ENCODE measurements at regions of chr21 and their contacts with region 1.

Region 1: DNA sequence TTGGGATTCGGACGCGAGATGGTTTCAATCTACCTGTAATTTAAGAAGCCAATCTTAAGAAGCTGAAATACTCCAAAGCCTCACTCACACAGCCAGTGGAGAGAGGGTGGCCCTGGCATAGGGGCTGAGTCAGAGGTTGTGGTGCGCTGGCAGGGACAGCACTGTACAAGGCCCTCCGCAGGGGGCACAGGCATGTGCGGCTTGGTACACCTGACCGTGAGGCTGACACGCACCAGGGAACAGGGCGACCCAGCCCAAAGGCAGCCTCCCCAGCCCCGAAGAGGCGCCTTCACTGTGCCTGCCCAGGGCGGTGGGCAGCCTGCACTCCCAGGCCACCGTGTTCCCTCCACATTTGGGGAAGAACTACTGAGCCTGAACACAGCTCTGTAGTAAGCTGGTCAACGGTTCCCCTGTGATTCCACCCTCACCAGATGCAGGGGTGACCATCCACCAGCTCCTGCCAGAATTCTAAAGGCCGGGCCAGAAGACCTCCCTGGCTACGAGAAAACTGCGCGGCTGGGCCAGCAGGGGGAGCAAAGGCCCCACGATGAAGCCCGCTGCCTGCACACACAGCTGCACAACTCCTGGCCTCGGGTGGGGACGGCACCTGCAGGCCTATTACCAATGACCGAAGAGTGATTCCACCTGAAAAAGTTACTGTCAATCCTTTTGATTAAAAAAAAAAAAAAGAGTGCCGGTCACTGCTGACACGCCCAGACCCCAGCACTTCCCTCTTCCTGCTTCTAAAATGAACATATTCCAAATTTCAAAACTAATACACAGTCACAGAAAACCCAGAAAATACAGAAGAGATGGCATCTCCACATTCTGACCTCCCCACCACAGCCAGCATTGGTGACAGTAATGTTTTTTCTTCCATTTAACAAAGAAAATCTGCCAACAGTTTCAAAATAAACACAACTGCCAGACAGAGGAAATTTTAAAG is 49.6 kb upstream of the RIPK4 start:
- DNase-seq: no peak
- ATAC-seq: peak; percentile 99
- H3K4me3 ChIP-seq: no peak overlapping the region
- H3K27ac ChIP-seq: no peak overlapping the region
- H3K4me1 ChIP-seq: peaks cover 5% of the 10 kb centered on the region; the same call in 1 of the 2 replicates
- H3K27me3 ChIP-seq: no peaks in the 10 kb centered on the region
- CTCF ChIP-seq: peak; percentile 84 to 93 (median 87)
- EP300 ChIP-seq: no peak
- POLR2A ChIP-seq: no peak
- RAD21 ChIP-seq: peak; percentile 88

Region 2: DNA sequence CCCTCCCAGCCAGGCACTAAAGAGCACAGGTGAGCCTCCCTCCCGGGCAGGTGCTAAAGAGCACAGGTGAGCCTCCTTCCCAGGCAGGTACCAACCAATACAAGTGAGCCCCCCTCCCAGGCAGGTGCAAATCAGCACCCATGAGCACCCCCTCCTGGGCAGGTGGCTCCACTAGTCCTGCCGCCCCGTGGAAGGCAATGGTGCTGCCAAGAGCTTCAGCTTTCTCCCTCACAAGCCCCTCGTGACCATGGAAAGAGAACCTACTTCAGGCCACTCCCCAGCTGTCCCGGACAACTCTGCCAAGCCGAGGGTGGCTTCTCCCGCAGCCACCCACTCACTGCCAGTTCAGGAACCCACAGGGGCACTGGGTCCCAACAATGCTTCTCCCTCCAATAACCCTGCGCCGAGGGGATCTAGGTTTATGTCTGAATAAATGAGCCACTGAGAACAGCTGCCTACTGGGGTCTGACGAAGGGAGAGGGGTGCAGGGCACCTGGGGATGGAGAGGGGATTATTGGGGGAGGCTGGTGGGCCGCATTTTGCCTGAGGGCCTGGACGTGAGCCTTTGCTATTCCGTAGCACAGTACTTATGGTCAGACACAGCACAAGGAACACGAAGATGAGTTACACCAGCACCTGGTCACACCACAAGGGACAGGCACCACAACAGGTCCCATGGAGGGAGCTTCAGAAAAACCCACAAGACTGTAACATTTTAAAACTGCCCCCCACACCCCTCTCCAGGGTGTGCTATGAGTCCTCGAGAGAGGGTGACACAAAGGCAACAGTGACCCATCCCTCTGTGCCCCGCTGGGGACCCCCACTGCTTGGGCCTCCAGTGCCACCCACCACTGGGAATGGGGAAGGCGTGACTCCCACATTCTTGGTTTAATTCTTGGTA is 16.4 kb after region 1 on chr21:
- CTCF ChIA-PET with region 1: interaction called, 13 read pairs
- POLR2A ChIA-PET with region 1: no interaction called
- RAD21 ChIA-PET with region 1: interaction called, 6 read pairs
- SMC1A ChIA-PET with region 1: interaction called, 6 read pairs
- in situ Hi-C with region 1: no loop called
- intact Hi-C with region 1: no loop called
- DNase-seq: peak; percentile 34
- ATAC-seq: peak; percentile 79
- H3K4me3 ChIP-seq: no peak overlapping the region
- H3K27ac ChIP-seq: peak overlapping the region; percentile 70
- H3K4me1 ChIP-seq: peaks cover 40% of the 10 kb centered on the region
- H3K27me3 ChIP-seq: no peaks in the 10 kb centered on the region
- CTCF ChIP-seq: peak in 2 of 3 experiments; percentile 6 to 11; a peak in 1 of 6 replicates
- EP300 ChIP-seq: no peak
- POLR2A ChIP-seq: peak; percentile 3; the same call in 1 of the 2 replicates
- RAD21 ChIP-seq: no peak

Region 3: DNA sequence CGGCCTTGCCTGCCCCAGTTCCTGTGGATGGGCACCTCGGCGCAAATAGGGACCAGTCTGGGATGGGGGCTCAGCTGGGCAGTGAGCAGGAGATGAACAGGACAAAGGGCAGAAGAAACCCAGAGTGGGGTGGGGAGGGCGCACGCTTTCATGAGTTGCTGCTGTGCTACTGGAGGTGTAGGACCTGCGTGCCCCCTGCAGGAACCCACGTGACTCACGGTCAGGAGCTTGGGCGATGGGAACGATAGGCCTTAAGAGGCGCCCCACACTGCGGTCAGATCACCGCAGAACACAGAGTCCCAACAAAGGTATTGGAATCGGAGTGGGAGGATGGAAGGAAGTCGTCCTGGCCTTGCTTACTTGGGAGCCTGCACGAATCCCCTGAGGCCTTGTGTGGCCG is 45.5 kb after region 1 on chr21:
- CTCF ChIA-PET with region 1: interaction called, 23 read pairs
- POLR2A ChIA-PET with region 1: no interaction called
- RAD21 ChIA-PET with region 1: interaction called, 6 read pairs
- SMC1A ChIA-PET with region 1: no interaction called
- in situ Hi-C with region 1: no loop called
- intact Hi-C with region 1: loop called (anchors 5 kb)
- DNase-seq: no peak
- ATAC-seq: peak; percentile 49
- H3K4me3 ChIP-seq: peak overlapping the region; percentile 58
- H3K27ac ChIP-seq: peak overlapping the region; percentile 91
- H3K4me1 ChIP-seq: peaks cover 51% of the 10 kb centered on the region
- H3K27me3 ChIP-seq: no peaks in the 10 kb centered on the region
- CTCF ChIP-seq: peak; percentile 43 to 60 (median 49); a peak in 5 of 6 replicates
- EP300 ChIP-seq: no peak
- POLR2A ChIP-seq: no peak
- RAD21 ChIP-seq: peak; percentile 47; the same call in 1 of the 2 replicates

Region 4: GRCh38 chr21:41933313-41934086 is 117.0 kb after region 1 on chr21:
- CTCF ChIA-PET with region 1: no interaction called
- POLR2A ChIA-PET with region 1: no interaction called
- RAD21 ChIA-PET with region 1: no interaction called
- SMC1A ChIA-PET with region 1: no interaction called
- in situ Hi-C with region 1: no loop called
- intact Hi-C with region 1: no loop called
- DNase-seq: no peak
- ATAC-seq: no peak
- H3K4me3 ChIP-seq: no peak overlapping the region
- H3K27ac ChIP-seq: 0 out of 2 replicates have a peak overlapping the region, but pooled peaks have one; percentile 2
- H3K4me1 ChIP-seq: peaks cover 17% of the 10 kb centered on the region
- H3K27me3 ChIP-seq: no peaks in the 10 kb centered on the region
- CTCF ChIP-seq: no peak; a peak in 1 of 6 replicates
- EP300 ChIP-seq: no peak
- POLR2A ChIP-seq: no peak
- RAD21 ChIP-seq: no peak

Region 5: DNA sequence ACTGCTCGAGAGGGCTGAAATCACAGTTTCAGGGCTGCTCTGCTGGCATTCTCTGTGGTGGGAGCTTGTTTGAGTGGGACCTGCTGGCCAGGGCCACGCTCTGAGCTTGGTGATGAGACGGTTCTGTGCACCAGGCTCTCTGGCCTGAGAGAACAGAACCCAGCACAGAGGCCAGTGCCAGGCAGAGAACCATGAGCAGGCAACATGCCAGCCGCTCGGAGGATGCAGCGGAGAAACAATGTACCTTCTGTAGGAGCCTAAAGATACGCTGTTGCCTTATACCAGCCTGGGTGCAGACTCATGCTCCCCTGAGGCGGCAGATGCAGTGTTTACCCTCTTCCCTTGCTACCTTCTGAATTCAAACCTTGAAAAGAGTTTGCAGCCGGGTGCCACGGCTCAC is 127.4 kb after region 1 on chr21:
- CTCF ChIA-PET with region 1: no interaction called
- POLR2A ChIA-PET with region 1: no interaction called
- RAD21 ChIA-PET with region 1: no interaction called
- SMC1A ChIA-PET with region 1: no interaction called
- in situ Hi-C with region 1: no loop called
- intact Hi-C with region 1: no loop called
- DNase-seq: no peak
- ATAC-seq: no peak
- H3K4me3 ChIP-seq: no peak overlapping the region
- H3K27ac ChIP-seq: no peak overlapping the region
- H3K4me1 ChIP-seq: no peaks in the 10 kb centered on the region
- H3K27me3 ChIP-seq: no peaks in the 10 kb centered on the region
- CTCF ChIP-seq: no peak
- EP300 ChIP-seq: no peak
- POLR2A ChIP-seq: no peak
- RAD21 ChIP-seq: no peak

Measured in GM12878 (cell line).